PC-9 (cell line): ENCODE measurements at regions of chr5 and their contacts with region 1.

Region 1: DNA sequence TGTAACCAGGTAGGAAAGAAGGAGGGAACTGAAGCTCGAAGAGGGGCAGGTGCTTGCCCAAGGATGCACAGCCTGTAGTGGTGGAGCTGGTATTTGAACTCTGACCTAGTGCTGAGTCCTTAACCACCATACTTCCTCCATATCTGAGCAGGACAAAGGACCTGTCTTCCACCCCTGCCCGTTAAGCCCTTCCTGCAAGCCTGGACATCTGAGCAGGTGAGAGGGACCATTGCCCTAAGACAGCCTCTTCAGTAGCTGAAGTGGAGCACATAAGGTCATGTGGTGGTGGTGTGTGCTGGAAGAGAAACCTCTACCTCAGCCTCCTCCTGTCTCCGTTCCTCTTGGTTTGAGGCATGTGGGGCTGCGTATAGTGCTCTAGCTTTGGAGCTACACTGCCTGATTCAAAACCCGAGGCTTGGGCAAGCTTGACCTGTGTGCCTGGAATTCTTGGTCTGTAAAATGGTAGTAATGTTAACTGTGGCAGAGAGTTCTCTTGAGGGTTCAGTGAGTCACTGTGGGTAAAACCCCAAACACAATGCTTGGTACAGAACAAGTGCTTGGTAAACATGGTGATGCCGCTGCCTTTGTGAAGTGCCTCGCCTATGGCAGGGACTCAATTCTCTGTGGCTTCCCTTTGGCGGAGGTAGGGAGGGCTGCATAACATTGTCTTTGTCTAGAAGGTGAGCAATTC is 7.4 kb downstream of the GALNT10 start:
- DNase-seq: peak; percentile 81 to 91
- H3K4me3 ChIP-seq: no peak overlapping the region
- H3K27ac ChIP-seq: peak overlapping the region; percentile 66
- H3K4me1 ChIP-seq: peaks cover 68% of the 10 kb centered on the region
- H3K27me3 ChIP-seq: no peaks in the 10 kb centered on the region
- CTCF ChIP-seq: no peak

Region 2: GRCh38 chr5:154214371-154215106 is 16.6 kb after region 1 on chr5:
- CTCF ChIA-PET with region 1: interaction called, 7 read pairs
- POLR2A ChIA-PET with region 1: no interaction called
- intact Hi-C with region 1: loop called (anchors 1 kb)
- DNase-seq: peak in 1 of 2 experiments; percentile 83
- H3K4me3 ChIP-seq: no peak overlapping the region
- H3K27ac ChIP-seq: peak overlapping the region; percentile 79
- H3K4me1 ChIP-seq: peaks cover 74% of the 10 kb centered on the region
- H3K27me3 ChIP-seq: no peaks in the 10 kb centered on the region
- CTCF ChIP-seq: no peak

Region 3: DNA sequence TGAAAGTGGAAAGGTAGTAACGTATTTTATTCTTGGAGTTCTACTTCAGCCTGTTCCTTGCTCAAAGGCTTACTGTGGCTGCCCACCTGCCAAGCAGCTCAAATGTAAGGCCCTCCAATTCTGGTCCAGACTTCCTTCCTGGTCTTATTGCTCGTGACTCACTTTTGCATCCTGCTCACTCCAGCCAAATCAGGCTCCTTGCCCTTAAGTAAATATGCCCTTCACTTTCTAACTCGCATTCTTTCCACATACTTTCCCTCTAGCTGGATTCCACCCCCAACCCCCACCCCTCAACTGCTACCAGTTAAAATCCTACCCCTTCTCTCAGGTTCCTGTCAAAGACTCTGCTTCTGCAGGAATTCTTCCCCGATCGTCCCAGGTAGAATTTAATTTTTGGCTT is 89.2 kb after region 1 on chr5:
- CTCF ChIA-PET with region 1: no interaction called
- POLR2A ChIA-PET with region 1: no interaction called
- intact Hi-C with region 1: no loop called
- DNase-seq: peak; percentile 65 to 93
- H3K4me3 ChIP-seq: peak overlapping the region; percentile 27; the same call in 1 of the 2 replicates
- H3K27ac ChIP-seq: peak overlapping the region; percentile 71
- H3K4me1 ChIP-seq: peaks cover 64% of the 10 kb centered on the region
- H3K27me3 ChIP-seq: no peaks in the 10 kb centered on the region
- CTCF ChIP-seq: no peak

Region 4: GRCh38 chr5:154308443-154309370 is 110.8 kb after region 1 on chr5:
- CTCF ChIA-PET with region 1: interaction called, 4 read pairs
- POLR2A ChIA-PET with region 1: no interaction called
- intact Hi-C with region 1: loop called (anchors 1 kb)
- DNase-seq: peak in 1 of 2 experiments; percentile 79
- H3K4me3 ChIP-seq: no peak overlapping the region
- H3K27ac ChIP-seq: peak overlapping the region; percentile 60
- H3K4me1 ChIP-seq: peaks cover 73% of the 10 kb centered on the region
- H3K27me3 ChIP-seq: no peaks in the 10 kb centered on the region
- CTCF ChIP-seq: no peak

Region 5: GRCh38 chr5:154368041-154368800 is 170.3 kb after region 1 on chr5:
- CTCF ChIA-PET with region 1: no interaction called
- POLR2A ChIA-PET with region 1: no interaction called
- intact Hi-C with region 1: loop called (anchors 2 kb)
- DNase-seq: peak; percentile 76 to 96
- H3K4me3 ChIP-seq: peak overlapping the region; percentile 34; the same call in 1 of the 2 replicates
- H3K27ac ChIP-seq: peak overlapping the region; percentile 98
- H3K4me1 ChIP-seq: peaks cover 69% of the 10 kb centered on the region
- H3K27me3 ChIP-seq: no peaks in the 10 kb centered on the region
- CTCF ChIP-seq: no peak

Region 6: DNA sequence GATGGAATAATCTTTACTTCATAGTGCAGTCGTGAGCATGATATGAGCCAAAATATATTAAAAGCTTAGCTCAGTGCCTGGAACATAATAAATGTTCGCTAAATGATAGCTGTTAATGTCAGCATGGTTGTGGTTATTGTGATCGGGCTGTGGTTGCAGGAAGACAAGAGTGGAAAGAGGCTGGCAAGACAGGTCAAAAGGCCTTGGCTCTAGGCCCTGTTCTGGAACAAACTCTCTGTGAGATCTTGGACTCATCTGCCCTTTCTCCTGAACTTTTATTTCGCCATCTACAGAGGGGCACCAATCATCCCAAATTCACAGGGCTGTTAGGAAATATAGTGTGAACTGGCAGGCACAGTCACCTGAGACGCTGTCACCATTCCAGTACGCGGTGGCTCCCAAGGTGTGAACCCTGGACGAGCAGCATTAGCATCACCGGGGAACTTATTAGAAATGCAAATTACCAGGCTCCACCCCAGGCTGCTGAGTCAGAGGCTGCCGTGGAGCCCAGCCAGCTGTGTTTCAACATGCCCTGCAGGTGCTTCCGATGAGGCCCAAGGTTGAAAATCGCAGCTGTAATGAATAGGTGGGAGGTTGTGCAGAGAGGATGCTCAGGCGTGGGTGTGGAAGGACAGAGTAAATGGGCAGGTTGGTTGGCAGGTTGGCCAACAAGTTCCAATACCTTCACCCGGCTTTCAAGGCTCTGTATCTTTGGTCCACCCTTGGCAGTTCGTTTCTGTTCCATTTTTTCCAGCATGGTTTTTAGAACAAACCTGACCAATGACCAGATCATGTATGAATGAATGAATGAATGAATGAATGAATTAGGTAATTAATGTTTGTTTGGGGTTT is 197.7 kb after region 1 on chr5:
- CTCF ChIA-PET with region 1: no interaction called
- POLR2A ChIA-PET with region 1: no interaction called
- intact Hi-C with region 1: loop called (anchors 2 kb)
- DNase-seq: peak; percentile 83 to 90
- H3K4me3 ChIP-seq: no peak overlapping the region
- H3K27ac ChIP-seq: peak overlapping the region; percentile 85
- H3K4me1 ChIP-seq: peaks cover 34% of the 10 kb centered on the region
- H3K27me3 ChIP-seq: no peaks in the 10 kb centered on the region
- CTCF ChIP-seq: no peak

Region 7: DNA sequence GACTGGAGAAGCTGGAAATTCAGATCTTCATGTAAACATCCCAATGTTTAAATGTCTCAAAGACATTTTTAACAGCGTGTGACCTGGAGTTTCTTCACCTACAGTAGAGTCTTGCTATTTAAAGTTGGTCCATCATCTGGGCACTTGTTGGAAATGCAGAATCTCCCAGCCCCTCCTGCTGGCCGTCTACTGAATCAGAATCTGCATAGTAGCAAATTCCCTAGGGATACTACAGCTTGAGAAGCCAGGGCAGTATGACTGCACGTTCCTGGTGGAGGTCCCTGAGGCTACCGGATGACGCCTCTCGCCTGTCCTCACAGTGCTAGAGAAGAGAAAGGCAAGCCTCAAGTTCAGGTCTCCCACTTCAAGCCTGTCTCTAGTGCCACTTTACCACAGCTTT is 263.6 kb after region 1 on chr5:
- CTCF ChIA-PET with region 1: no interaction called
- POLR2A ChIA-PET with region 1: interaction called, 20 read pairs
- intact Hi-C with region 1: no loop called
- DNase-seq: peak in 1 of 2 experiments; percentile 15
- H3K4me3 ChIP-seq: no peak overlapping the region
- H3K27ac ChIP-seq: no peak overlapping the region
- H3K4me1 ChIP-seq: peaks cover 15% of the 10 kb centered on the region
- H3K27me3 ChIP-seq: no peaks in the 10 kb centered on the region
- CTCF ChIP-seq: peak; percentile 40; the same call in 1 of the 2 replicates

Region 8: DNA sequence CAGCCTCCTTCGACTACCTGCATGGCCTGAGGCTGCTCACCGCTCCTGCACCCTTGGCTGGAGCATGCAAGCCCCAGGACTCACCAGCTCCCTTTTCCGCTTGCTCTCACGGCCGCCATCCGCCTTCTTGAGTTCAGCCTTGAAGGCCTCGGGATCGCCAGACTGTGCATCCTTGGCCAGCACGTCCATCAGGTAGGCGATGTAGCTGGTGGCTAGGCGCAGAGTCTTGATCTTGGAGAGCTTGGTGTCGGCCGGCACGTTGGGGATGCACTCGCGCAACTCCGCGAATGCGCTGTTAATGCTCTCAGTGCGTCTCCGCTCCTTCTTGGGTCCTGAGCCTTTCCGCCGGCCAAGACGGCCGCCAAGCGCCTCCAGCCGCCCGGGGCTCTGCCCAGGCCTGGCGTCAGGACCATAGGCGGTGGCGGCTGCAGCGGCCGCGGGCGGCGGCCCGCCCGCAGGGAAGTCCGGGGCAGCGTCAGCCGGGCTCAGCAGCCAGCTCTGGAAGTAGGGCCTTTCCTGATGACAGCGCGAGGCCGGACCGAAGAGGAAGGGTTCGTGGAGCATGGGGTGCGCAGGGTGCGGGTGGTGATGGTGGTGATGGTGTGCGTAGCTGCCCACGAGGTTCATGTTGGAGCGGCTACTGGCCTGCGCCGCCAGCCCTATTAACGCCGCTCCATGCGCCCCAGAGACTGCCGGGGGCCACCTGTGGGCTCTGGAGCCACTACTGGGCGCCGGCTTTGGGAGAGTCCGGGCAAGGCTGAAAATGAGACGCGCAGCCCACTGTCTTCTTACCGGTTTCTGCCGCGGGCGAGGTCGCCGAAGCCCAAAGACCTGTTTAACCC is 279.7 kb after region 1 on chr5:
- CTCF ChIA-PET with region 1: no interaction called
- POLR2A ChIA-PET with region 1: no interaction called
- intact Hi-C with region 1: no loop called
- DNase-seq: no peak
- H3K4me3 ChIP-seq: no peak overlapping the region
- H3K27ac ChIP-seq: no peak overlapping the region
- H3K4me1 ChIP-seq: no peaks in the 10 kb centered on the region
- H3K27me3 ChIP-seq: peaks cover 48% of the 10 kb centered on the region
- CTCF ChIP-seq: no peak